Caco-2 (cell line): ENCODE measurements at regions of chr1 and their contacts with region 1.

Region 1: DNA sequence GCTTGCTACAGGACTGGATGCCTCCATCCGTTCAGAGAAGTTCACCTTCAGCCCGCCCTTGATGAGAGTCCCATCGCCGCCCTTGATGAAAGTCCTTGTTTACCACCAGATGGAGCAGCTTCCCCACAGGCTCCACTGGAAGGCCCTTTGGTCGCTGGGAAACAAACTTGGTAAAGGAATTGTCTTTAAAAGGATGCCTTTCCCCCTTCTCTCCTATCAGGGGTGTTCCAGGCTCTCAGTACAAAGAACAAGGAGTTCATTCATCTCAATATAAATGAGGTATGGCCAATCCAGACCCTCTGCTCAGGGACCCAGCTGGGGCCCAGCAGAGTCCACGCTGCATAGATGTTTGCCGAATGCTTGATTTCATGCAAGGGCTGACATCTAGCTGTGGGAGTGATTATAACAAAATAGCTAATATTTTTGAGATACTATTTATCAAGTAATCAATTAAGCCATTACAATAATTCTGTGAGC is 50.8 kb downstream of the CAPN9 start:
- DNase-seq: peak; percentile 70 to 73
- H3K4me3 ChIP-seq: no peak overlapping the region
- H3K4me3 Mint-ChIP-seq: no peak overlapping the region
- H3K27ac Mint-ChIP-seq: no peak overlapping the region
- H3K4me1 ChIP-seq: no peaks in the 10 kb centered on the region
- H3K4me1 Mint-ChIP-seq: peaks cover 7% of the 10 kb centered on the region
- H3K27me3 ChIP-seq: no peaks in the 10 kb centered on the region
- H3K27me3 Mint-ChIP-seq: no peaks in the 10 kb centered on the region
- CTCF ChIP-seq: peak; percentile 76 to 83

Region 2: GRCh38 chr1:230752456-230752855 is 45.5 kb before region 1 on chr1:
- CTCF ChIA-PET with region 1: no interaction called
- POLR2A ChIA-PET with region 1: no interaction called
- intact Hi-C with region 1: no loop called
- DNase-seq: no peak
- H3K4me3 ChIP-seq: no peak overlapping the region
- H3K4me3 Mint-ChIP-seq: peak overlapping the region; percentile 34
- H3K27ac Mint-ChIP-seq: peak overlapping the region; percentile 85
- H3K4me1 ChIP-seq: peaks cover 45% of the 10 kb centered on the region
- H3K4me1 Mint-ChIP-seq: peaks cover 37% of the 10 kb centered on the region
- H3K27me3 ChIP-seq: no peaks in the 10 kb centered on the region
- H3K27me3 Mint-ChIP-seq: no peaks in the 10 kb centered on the region
- CTCF ChIP-seq: no peak

Region 3: DNA sequence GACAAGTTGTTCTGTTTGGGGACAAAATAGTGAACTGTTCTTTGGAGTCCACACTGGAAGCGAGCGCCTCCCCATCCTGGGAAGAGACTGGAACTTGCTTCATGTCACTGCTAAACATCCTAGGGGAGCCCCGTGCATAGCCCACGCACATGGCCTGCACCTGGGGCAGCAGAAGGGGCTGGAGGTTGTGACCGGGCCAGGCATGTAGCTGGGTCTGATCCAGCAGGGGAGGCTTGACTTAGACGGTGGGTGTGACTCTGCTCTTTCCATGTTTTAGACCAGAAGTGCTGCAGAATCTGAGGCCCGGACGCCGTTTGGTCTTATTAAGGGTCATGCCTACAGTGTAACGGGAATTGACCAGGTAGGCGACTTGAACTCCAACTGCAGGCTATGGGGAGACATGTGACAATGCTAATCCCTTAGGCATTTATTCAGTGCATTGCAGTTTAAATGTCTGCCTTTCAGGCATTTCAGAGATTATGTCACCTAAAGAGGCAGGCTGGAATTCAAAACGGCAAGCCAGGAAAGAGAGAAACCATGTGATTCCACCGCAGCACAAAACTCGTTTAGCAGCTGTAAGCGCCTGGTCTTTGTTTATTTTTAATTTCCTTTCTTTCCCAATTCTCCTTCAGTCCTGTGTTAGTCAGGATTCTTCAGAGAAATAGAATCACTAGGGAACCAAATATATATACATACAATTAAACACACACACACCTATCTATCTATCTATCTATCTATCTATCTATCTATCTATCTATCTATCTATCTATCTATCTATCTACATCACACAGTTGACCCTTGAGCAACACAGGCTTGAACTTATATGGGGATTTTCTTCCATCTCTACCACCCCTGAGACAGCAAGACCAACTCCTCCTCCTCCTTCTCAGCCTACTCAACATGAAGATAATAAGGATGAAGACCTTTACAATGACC is 28.8 kb before region 1 on chr1:
- CTCF ChIA-PET with region 1: no interaction called
- POLR2A ChIA-PET with region 1: no interaction called
- intact Hi-C with region 1: no loop called
- DNase-seq: peak in 1 of 2 experiments; percentile 40
- H3K4me3 ChIP-seq: no peak overlapping the region
- H3K4me3 Mint-ChIP-seq: no peak overlapping the region
- H3K27ac Mint-ChIP-seq: no peak overlapping the region
- H3K4me1 ChIP-seq: peaks cover 13% of the 10 kb centered on the region
- H3K4me1 Mint-ChIP-seq: peaks cover 7% of the 10 kb centered on the region
- H3K27me3 ChIP-seq: no peaks in the 10 kb centered on the region
- H3K27me3 Mint-ChIP-seq: no peaks in the 10 kb centered on the region
- CTCF ChIP-seq: no peak

Region 4: GRCh38 chr1:230867903-230868735 is 70.1 kb after region 1 on chr1 and contains the start of gene C1orf198:
- CTCF ChIA-PET with region 1: interaction called, 4 read pairs
- POLR2A ChIA-PET with region 1: no interaction called
- intact Hi-C with region 1: loop called (anchors 1 kb)
- DNase-seq: peak; percentile 81 to 87
- H3K4me3 ChIP-seq: peak within 1 kb of the TSS; percentile 90
- H3K4me3 Mint-ChIP-seq: peak within 1 kb of the TSS; percentile 81
- H3K27ac Mint-ChIP-seq: peak within 1 kb of the TSS; percentile 97
- H3K4me1 ChIP-seq: peaks cover 35% of the 10 kb centered on the region
- H3K4me1 Mint-ChIP-seq: peaks cover 42% of the 10 kb centered on the region
- H3K27me3 ChIP-seq: no peaks in the 10 kb centered on the region
- H3K27me3 Mint-ChIP-seq: no peaks in the 10 kb centered on the region
- CTCF ChIP-seq: no peak
- total RNA-seq, gene C1orf198: 80.1 and 92.2 TPM in 2 replicates

Region 5: GRCh38 chr1:230899841-230900251 is 101.9 kb after region 1 on chr1:
- CTCF ChIA-PET with region 1: interaction called, 4 read pairs
- POLR2A ChIA-PET with region 1: no interaction called
- intact Hi-C with region 1: loop called (anchors 5 kb)
- DNase-seq: peak; percentile 57 to 58
- H3K4me3 ChIP-seq: no peak overlapping the region
- H3K4me3 Mint-ChIP-seq: peak overlapping the region; percentile 0
- H3K27ac Mint-ChIP-seq: peak overlapping the region; percentile 42
- H3K4me1 ChIP-seq: peaks cover 33% of the 10 kb centered on the region
- H3K4me1 Mint-ChIP-seq: peaks cover 32% of the 10 kb centered on the region
- H3K27me3 ChIP-seq: no peaks in the 10 kb centered on the region
- H3K27me3 Mint-ChIP-seq: no peaks in the 10 kb centered on the region
- CTCF ChIP-seq: no peak

Region 6: DNA sequence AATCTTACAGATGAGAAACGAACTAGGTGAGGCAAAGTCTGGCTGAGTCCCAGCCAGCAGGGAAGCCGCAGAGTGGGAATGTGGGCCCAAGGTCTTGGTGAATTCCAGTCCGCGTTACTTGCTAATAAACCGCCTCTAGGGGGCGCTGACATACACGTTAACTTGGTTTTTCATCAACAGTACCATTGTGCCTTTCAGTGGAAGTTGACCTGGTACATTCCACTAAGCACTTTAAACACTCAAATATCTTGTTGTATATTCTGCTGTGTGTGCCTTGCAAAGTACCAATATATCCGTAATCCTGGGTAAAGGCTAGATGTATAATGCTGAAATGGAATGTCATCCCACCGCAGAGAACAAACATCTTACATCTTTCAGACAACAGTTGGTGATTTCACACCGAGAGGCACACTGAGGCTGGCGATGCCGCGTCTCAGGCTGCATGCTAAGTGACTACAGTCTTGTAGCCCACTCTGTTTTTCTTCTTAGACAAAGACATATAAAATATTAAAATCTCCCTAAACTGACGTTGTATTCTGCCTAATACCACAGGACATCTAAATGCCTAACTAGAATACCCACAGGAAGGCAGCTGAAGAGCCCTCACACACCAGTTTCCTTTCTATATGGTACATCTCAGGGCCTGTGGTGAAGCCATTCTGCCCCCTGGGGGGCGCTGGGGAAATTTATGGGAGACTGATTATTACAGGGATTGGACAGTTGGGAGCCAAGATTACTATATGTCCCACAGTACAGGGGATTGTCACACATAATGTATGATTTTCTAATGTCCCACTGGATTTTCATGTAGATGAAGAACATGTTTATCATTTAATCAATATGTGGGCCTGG is 119.5 kb after region 1 on chr1:
- CTCF ChIA-PET with region 1: interaction called, 4 read pairs
- POLR2A ChIA-PET with region 1: no interaction called
- intact Hi-C with region 1: loop called (anchors 1 kb)
- DNase-seq: peak; percentile 84
- H3K4me3 ChIP-seq: no peak overlapping the region
- H3K4me3 Mint-ChIP-seq: no peak overlapping the region
- H3K27ac Mint-ChIP-seq: no peak overlapping the region
- H3K4me1 ChIP-seq: peaks cover 25% of the 10 kb centered on the region
- H3K4me1 Mint-ChIP-seq: peaks cover 33% of the 10 kb centered on the region
- H3K27me3 ChIP-seq: no peaks in the 10 kb centered on the region
- H3K27me3 Mint-ChIP-seq: no peaks in the 10 kb centered on the region
- CTCF ChIP-seq: peak; percentile 69 to 70

Region 7: GRCh38 chr1:231020139-231020601 is 222.2 kb after region 1 on chr1:
- CTCF ChIA-PET with region 1: no interaction called
- POLR2A ChIA-PET with region 1: no interaction called
- intact Hi-C with region 1: loop called (anchors 10 kb)
- DNase-seq: no peak
- H3K4me3 ChIP-seq: no peak overlapping the region
- H3K4me3 Mint-ChIP-seq: no peak overlapping the region
- H3K27ac Mint-ChIP-seq: no peak overlapping the region
- H3K4me1 ChIP-seq: no peaks in the 10 kb centered on the region
- H3K4me1 Mint-ChIP-seq: no peaks in the 10 kb centered on the region
- H3K27me3 ChIP-seq: no peaks in the 10 kb centered on the region
- H3K27me3 Mint-ChIP-seq: no peaks in the 10 kb centered on the region
- CTCF ChIP-seq: no peak